ENCODE measurements at regions of chr1 and their contacts with region 1.

Region 1: DNA sequence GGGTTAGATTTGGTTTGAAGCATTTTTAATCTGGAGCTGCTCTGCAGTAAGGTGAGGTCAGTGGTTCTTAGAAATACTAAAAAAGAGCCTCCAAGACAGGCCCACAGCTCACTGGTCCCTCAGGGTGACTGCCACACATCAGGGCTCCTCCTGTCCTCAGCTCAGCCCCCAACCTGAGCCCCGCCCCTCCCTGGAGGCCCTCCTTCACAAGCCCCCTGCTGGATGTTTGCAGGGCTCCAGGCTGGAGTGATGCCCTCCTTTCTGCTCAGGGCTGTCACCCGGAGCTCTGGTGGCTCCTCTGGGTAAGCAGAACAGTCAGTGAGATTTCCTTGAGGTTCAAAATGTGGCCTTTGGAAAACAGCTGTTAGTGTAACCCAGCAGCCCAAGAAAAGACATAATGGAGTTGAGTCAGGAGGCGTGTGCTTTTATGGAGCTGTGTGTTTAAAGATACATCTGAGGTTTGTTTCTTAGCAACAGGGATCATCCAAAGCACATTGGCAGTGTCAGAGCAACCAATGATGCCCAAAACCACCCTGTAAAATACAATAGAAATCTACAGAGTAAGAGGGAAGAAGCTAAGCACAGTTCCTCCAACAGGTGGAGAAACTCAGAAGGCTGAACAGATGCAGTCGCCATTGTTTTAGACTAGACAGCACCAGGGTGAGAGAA is 21.4 kb downstream of the STUM start:
- DNase-seq: peak in 1 of 2 experiments; percentile 78
- H3K4me3 ChIP-seq: no peak overlapping the region
- H3K27ac ChIP-seq: no peak overlapping the region
- H3K4me1 ChIP-seq: peaks cover 0 to 4% (median 2%) of the 10 kb centered on the region in 4 experiments; a peak in 2 of 7 replicates
- H3K27me3 ChIP-seq: no peaks in the 10 kb centered on the region
- CTCF ChIP-seq: peak; percentile 64 to 69 (median 65)
- EP300 ChIP-seq: no peak
- POLR2A ChIP-seq: no peak
- RAD21 ChIP-seq: peak; percentile 20 to 50; a peak in 2 of 4 replicates

Region 2: DNA sequence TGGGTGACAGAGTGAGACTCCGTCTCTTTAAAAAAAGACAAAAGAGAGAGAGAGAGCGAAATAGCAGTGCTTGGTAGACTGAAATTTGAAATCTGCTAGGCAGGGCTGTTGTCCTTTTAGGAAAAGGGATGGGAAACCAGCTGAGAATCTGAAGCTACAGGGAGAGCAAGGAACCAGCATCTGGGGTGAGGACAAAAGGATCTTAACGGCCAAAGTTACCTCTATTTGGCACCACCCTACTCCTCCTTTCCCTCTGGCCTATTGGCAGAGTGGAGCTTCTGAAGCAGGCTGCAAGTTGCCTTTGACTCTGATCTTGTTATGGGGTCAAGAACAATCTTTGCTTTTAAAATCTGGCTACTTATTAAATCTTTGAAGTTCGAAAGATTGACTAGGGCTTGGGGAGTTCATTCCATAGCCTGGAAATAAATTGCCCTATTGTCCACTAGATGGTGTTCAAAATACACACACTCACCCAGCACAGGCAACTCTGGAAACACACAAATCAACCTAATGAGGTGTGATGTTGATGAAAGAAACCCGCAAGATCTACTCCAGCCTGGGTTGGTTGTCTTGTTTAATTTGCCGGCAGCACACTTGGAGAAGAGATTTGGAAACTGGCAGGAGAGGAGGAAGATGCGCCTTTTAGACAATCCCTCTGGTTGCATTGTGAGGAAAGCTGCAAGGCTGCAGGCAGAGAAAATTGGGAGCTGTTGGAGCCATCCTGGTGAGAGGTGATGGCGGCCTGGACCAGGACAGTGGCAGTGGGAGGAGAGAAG is 145.6 kb before region 1 on chr1:
- CTCF ChIA-PET with region 1: interaction called, 12 read pairs
- POLR2A ChIA-PET with region 1: no interaction called
- DNase-seq: no peak
- H3K4me3 ChIP-seq: no peak overlapping the region
- H3K27ac ChIP-seq: no peak overlapping the region
- H3K4me1 ChIP-seq: peaks cover 0 to 9% (median 4%) of the 10 kb centered on the region in 4 experiments; a peak in 4 of 7 replicates
- H3K27me3 ChIP-seq: peaks cover 0 to 2% (median 0%) of the 10 kb centered on the region in 4 experiments; a peak in 1 of 7 replicates
- CTCF ChIP-seq: peak in 2 of 3 experiments; percentile 50 to 57; a peak in 3 of 4 replicates
- EP300 ChIP-seq: no peak
- POLR2A ChIP-seq: no peak
- RAD21 ChIP-seq: peak; percentile 67 to 71

Region 3: DNA sequence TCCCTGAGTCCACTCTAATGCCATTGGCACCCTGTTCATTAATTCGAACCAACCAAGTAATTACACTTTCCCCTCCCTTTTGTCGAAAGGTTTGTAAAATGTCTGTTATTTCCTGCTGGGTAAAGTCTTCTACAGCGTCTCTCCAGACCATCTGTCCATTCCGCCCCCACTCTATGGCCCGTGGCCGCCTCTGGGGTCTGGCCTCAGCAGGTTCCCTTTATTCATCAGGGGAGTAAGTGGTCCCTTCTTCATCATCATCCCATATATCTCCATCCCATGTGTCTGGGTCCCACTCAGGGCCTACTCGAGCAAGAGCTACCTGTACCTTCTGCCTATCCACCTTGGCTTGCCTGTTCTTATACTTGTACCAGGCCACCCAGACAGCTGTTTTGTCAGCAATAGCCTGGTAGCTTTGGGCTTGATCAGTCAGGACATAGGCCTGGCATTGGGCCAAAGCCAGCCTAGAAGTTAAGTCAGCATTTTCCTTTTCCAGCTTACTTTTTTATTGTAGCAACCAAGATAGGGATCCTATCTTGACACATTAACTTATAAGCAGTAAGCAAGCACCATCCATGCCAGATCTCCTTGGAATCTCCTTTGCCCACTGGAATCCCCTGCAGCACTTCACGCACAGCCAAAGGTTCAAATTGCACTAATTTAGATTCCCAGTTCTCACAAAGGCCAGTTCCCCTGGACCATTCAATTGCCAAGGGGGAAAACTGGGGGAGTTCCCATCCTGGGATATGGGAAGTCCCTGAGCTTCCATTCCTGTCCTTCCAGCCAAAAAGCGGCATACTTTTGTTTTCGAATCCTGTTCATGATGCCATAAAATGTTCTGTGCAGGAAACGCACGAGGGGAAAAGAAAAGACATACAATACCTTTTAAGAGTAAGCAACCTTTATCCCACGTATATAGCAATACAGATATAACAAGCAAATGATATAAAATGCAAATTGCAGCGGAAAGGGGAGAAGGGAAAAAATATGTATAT is 28.1 kb before region 1 on chr1:
- CTCF ChIA-PET with region 1: interaction called, 42 read pairs
- POLR2A ChIA-PET with region 1: no interaction called
- DNase-seq: no peak
- H3K4me3 ChIP-seq: no peak overlapping the region
- H3K27ac ChIP-seq: no peak overlapping the region
- H3K4me1 ChIP-seq: no peaks in the 10 kb centered on the region
- H3K27me3 ChIP-seq: peaks cover 0 to 18% (median 14%) of the 10 kb centered on the region in 4 experiments; a peak in 6 of 7 replicates
- CTCF ChIP-seq: no peak
- EP300 ChIP-seq: no peak
- POLR2A ChIP-seq: no peak
- RAD21 ChIP-seq: no peak

Region 4: GRCh38 chr1:226553924-226554282 is 16.1 kb before region 1 on chr1:
- CTCF ChIA-PET with region 1: interaction called, 42 read pairs
- POLR2A ChIA-PET with region 1: no interaction called
- DNase-seq: no peak
- H3K4me3 ChIP-seq: no peak overlapping the region
- H3K27ac ChIP-seq: no peak overlapping the region
- H3K4me1 ChIP-seq: peaks cover 3 to 21% (median 12%) of the 10 kb centered on the region in 4 experiments
- H3K27me3 ChIP-seq: peaks cover 10 to 21% (median 20%) of the 10 kb centered on the region in 4 experiments
- CTCF ChIP-seq: no peak
- EP300 ChIP-seq: no peak
- POLR2A ChIP-seq: no peak
- RAD21 ChIP-seq: no peak

Region 5: GRCh38 chr1:226589008-226589733 is 19.2 kb after region 1 on chr1:
- CTCF ChIA-PET with region 1: interaction called, 27 read pairs
- POLR2A ChIA-PET with region 1: interaction called, 4 read pairs
- DNase-seq: no peak
- H3K4me3 ChIP-seq: no peak overlapping the region
- H3K27ac ChIP-seq: no peak overlapping the region
- H3K4me1 ChIP-seq: peaks cover 0 to 7% (median 0%) of the 10 kb centered on the region in 4 experiments; a peak in 3 of 7 replicates
- H3K27me3 ChIP-seq: no peaks in the 10 kb centered on the region
- CTCF ChIP-seq: no peak
- EP300 ChIP-seq: no peak
- POLR2A ChIP-seq: no peak
- RAD21 ChIP-seq: no peak

Region 6: GRCh38 chr1:226608699-226609505 is 38.9 kb after region 1 on chr1:
- CTCF ChIA-PET with region 1: interaction called, 35 read pairs
- POLR2A ChIA-PET with region 1: no interaction called
- DNase-seq: peak; percentile 70 to 88
- H3K4me3 ChIP-seq: no peak overlapping the region
- H3K27ac ChIP-seq: no peak overlapping the region
- H3K4me1 ChIP-seq: peaks cover 0 to 27% (median 16%) of the 10 kb centered on the region in 4 experiments; a peak in 6 of 7 replicates
- H3K27me3 ChIP-seq: no peaks in the 10 kb centered on the region
- CTCF ChIP-seq: peak; percentile 76 to 88 (median 84)
- EP300 ChIP-seq: no peak
- POLR2A ChIP-seq: no peak
- RAD21 ChIP-seq: peak; percentile 65 to 75

Measured in H1 (cell line).